ENCODE measurements at regions of chr6 and their contacts with region 1.

Region 1: GRCh38 chr6:112163295-112164257 is 76.2 kb downstream of the FAM229B start:
- DNase-seq: no peak
- H3K4me3 ChIP-seq: no peak overlapping the region
- CTCF ChIP-seq: peak; percentile 94

Region 2: DNA sequence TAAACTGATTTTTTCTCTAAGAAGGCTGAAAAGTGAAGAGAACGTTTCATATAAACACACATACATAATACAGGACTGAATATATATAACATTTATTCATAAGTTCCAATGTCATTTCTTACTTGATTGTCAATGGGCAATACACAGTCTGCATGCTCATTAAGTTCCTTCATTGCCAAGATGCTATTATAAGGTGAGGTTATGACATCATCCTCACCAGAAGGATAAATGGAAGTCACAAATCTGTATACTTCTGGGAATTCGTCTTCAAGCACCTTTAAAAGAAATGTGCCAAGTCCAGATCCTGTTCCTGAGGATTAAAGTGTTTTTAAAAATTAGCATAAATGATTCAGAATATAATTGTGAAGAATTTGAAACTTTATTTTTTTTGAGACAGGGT is 87.4 kb before region 1 on chr6:
- CTCF ChIA-PET with region 1: interaction called, 15 read pairs
- POLR2A ChIA-PET with region 1: no interaction called
- DNase-seq: no peak
- H3K4me3 ChIP-seq: no peak overlapping the region
- CTCF ChIP-seq: no peak

Region 3: DNA sequence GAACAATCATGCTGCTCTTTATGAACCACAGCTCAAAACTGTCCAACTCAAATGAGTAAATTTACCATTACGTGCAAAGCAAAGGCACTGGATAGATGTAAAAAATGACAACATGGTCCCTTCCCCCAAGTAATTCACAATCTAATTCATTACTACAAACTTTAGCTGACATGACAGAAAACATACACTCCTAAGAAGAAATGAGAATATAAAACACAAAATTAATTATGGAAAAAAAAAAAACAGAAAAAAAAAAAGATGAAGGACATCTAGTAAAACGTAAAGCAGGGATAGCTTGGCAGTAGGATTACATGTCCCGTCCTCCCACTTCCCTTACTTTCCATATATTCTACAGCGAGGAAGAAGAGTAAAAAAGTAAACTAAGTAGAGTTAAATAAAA is 82.0 kb before region 1 on chr6:
- CTCF ChIA-PET with region 1: interaction called, 126 read pairs
- POLR2A ChIA-PET with region 1: no interaction called
- DNase-seq: no peak
- H3K4me3 ChIP-seq: no peak overlapping the region
- CTCF ChIP-seq: no peak

Region 4: GRCh38 chr6:112087136-112087911 is 76.3 kb before region 1 on chr6 and contains the starts of genes FAM229B and TUBE1:
- CTCF ChIA-PET with region 1: interaction called, 126 read pairs
- POLR2A ChIA-PET with region 1: no interaction called
- DNase-seq: peak; percentile 93
- H3K4me3 ChIP-seq: peak within 1 kb of the TSS; percentile 85
- CTCF ChIP-seq: peak; percentile 7

Region 5: GRCh38 chr6:112109262-112109661 is 54.3 kb before region 1 on chr6:
- CTCF ChIA-PET with region 1: interaction called, 10 read pairs
- POLR2A ChIA-PET with region 1: no interaction called
- DNase-seq: no peak
- H3K4me3 ChIP-seq: no peak overlapping the region
- CTCF ChIP-seq: no peak

Region 6: GRCh38 chr6:112144145-112144926 is 19.2 kb before region 1 on chr6:
- CTCF ChIA-PET with region 1: interaction called, 41 read pairs
- POLR2A ChIA-PET with region 1: no interaction called
- DNase-seq: no peak
- H3K4me3 ChIP-seq: peak overlapping the region; percentile 21
- CTCF ChIP-seq: no peak